ENCODE measurements at regions of chr7 and their contacts with region 1.

Region 1: DNA sequence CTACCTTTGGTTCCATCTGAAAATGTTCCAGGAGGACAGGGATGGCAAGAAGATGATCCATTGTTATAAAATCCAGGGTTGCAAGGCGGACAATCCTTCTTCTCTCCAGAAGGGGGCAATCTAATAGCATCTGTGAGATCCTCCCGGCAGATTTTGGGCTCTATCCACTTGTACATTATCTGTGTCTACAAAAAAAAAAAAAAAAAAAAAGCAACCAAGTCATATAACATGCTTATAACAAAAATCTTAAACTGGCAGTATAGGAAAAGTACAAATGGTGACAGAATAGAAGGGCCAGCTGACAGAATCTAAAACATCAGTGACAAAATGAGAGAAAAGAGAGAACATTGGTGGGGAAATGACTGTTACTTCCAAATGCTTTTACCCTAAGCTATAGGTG is 132.7 kb downstream of the ELAPOR2 start:
- DNase-seq: no peak
- ATAC-seq: peak; percentile 65; the same call in 1 of the 2 replicates
- H3K4me3 ChIP-seq: no peak overlapping the region
- H3K27ac ChIP-seq: no peak overlapping the region
- H3K4me1 ChIP-seq: no peaks in the 10 kb centered on the region
- H3K27me3 ChIP-seq: peaks cover 3% of the 10 kb centered on the region; the same call in 1 of the 2 replicates
- CTCF ChIP-seq: peak; percentile 78

Region 2: DNA sequence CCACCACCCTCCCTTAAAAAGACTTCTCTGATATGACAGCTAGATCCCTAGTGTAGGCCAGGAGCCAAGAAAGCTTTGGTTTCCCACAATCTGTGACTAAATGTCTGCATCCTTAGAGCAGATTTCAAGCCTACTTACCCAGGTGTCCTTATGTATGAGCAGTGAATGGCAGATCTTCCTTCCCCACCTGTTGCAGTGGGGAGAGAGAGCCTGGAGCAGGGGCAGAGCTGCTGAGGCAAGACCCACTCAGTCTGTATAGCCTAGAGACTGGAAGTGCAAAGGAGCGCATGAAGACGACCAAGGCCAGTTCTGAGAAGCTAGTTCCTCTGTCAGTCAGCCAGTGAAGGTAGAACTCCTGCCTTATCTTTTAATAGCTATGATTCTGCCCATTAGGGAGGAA is 103.0 kb before region 1 on chr7:
- CTCF ChIA-PET with region 1: interaction called, 11 read pairs
- POLR2A ChIA-PET with region 1: no interaction called
- in situ Hi-C with region 1: no loop called
- intact Hi-C with region 1: no loop called
- DNase-seq: no peak
- ATAC-seq: no peak
- H3K4me3 ChIP-seq: no peak overlapping the region
- H3K27ac ChIP-seq: no peak overlapping the region
- H3K4me1 ChIP-seq: no peaks in the 10 kb centered on the region
- H3K27me3 ChIP-seq: no peaks in the 10 kb centered on the region
- CTCF ChIP-seq: no peak

Region 3: GRCh38 chr7:87148332-87148955 is 221.7 kb after region 1 on chr7:
- CTCF ChIA-PET with region 1: interaction called, 5 read pairs
- POLR2A ChIA-PET with region 1: no interaction called
- in situ Hi-C with region 1: no loop called
- intact Hi-C with region 1: loop called (anchors 2 kb)
- DNase-seq: peak; percentile 42
- ATAC-seq: no peak
- H3K4me3 ChIP-seq: no peak overlapping the region
- H3K27ac ChIP-seq: no peak overlapping the region
- H3K4me1 ChIP-seq: peaks cover 7% of the 10 kb centered on the region
- H3K27me3 ChIP-seq: no peaks in the 10 kb centered on the region; the same call in none of the 2 replicates
- CTCF ChIP-seq: peak; percentile 64; the same call in 1 of the 2 replicates